Sigmoid colon (tissue), 7 donors: ENCODE measurements at regions of chr6 and their contacts with region 1.

Region 1: DNA sequence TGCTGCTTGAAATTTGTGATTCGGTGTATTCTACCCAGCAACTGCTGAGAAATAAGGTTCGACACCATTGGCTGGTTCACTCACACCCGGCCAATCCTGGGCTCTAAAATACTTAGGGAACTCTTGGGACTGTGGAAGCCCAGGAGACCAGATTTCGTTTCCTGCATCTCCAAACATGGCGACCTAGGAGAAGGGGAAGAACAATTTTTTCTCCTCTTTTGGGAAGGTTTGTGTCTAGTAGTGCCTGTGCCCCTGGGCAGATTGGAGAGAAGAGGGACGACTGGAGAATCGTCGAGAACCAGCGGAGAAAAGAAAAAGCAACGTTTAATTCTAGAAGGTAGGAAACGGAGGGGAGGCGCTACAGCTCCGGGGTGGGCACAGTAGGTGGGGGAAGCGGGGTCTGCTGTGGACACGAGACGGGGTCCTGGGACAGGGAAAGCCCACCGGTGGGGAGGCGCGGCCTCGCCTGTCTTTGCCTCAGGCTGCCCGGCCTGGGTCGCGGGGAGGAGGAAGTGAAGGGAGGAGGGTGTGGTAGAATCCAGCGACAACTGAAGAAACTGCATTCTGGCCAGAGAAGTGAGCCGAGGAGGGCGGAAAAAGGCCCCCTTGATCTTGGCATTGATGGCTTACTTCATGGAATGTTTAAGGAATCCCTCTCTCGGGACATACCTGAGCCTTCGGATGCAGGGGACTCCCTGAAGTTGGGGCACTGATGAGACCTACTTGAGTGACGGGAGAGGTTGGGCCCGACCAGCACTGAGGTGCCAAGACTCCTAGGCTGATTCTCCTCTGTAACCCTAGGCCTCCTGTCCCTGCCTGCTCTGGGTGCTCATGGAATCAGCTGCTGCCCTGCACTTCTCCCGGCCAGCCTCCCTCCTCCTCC is at the start of gene BTN2A1:
- DNase-seq: peak; percentile 93
- H3K4me3 ChIP-seq: peak within 1 kb of the TSS; percentile 88 to 94 (median 92)
- H3K27ac ChIP-seq: peak within 1 kb of the TSS; percentile 93 to 96 (median 95)
- H3K4me1 ChIP-seq: peaks cover 0 to 52% (median 47%) of the 10 kb centered on the region in 4 donors
- H3K27me3 ChIP-seq: no peaks in the 10 kb centered on the region
- CTCF ChIP-seq: no peak
- EP300 ChIP-seq: no peak
- POLR2A ChIP-seq: peak in 1 of 2 donors; percentile 11
- total RNA-seq, gene BTN2A1: 17.6 to 24.6 (median 19.1) TPM

Region 2: DNA sequence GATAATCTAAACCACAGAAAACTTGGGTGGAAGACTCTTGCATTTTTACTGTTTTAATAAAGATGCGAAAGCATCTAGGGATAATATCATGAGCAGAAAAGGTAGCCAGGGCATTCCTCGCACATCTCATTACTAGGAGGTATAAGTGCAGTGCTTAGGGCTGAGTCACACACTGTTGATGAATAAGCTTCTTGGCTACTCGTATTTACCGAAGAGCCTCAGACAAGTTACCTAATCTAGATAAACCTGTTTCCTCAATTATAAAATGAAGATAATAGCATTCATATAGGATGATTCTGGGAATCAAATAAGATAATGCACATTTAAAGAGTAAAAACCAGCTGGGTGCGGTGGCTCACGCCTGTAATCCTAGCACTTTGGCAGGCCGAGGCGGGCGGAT is 1811.3 kb before region 1 on chr6:
- intact Hi-C with region 1: no loop called
- DNase-seq: no peak
- H3K4me3 ChIP-seq: no peak overlapping the region
- H3K27ac ChIP-seq: no peak overlapping the region
- H3K4me1 ChIP-seq: peaks cover 0 to 7% (median 2%) of the 10 kb centered on the region in 4 donors
- H3K27me3 ChIP-seq: peaks cover 0 to 16% (median 0%) of the 10 kb centered on the region in 3 donors
- CTCF ChIP-seq: no peak
- EP300 ChIP-seq: no peak
- POLR2A ChIP-seq: no peak

Region 3: GRCh38 chr6:26421259-26422144 is 36.5 kb before region 1 on chr6:
- intact Hi-C with region 1: loop called (anchors 5 kb)
- DNase-seq: peak; percentile 90
- H3K4me3 ChIP-seq: peak overlapping the region; percentile 59 to 81 (median 78)
- H3K27ac ChIP-seq: peak overlapping the region; percentile 88 to 93 (median 90)
- H3K4me1 ChIP-seq: peaks cover 0 to 40% (median 27%) of the 10 kb centered on the region in 4 donors
- H3K27me3 ChIP-seq: no peaks in the 10 kb centered on the region
- CTCF ChIP-seq: no peak
- EP300 ChIP-seq: no peak
- POLR2A ChIP-seq: peak in 1 of 2 donors; percentile 22

Region 4: DNA sequence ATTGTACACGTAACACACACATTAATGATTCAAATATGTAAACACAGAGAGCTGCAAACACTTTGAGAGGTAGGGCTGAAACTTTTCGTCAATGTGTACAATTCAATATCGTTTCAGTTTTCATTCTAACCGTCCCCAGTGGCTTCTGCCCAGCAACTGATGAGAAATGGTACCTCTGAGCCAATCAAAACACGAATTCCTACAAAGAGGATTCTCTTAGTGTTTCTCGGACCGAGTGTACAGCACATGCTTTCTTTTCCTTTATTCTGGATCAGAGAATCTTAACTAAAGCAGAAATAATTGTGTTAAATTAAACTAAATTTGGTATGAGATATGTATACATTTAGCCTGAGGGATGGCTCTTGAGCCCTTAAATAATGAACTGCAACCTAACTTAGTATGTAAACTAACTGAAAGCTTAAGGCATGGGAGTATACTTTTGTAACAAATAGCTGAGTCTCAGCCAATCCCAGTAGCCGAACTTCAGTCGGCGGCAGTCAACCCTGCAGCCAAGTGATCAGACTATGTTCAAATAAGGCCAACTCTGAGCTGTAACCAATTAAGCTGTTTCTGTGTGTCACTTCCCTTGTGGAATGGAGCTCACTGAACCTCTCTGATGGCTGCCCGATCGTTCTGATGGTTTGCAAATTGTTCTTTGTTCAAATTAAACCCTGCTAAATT is 15.9 kb after region 1 on chr6:
- intact Hi-C with region 1: loop called (anchors 2 kb)
- DNase-seq: peak; percentile 92
- H3K4me3 ChIP-seq: peak overlapping the region; percentile 34 to 53 (median 46)
- H3K27ac ChIP-seq: peak overlapping the region; percentile 88 to 92 (median 90)
- H3K4me1 ChIP-seq: peaks cover 0 to 30% (median 16%) of the 10 kb centered on the region in 4 donors
- H3K27me3 ChIP-seq: no peaks in the 10 kb centered on the region
- CTCF ChIP-seq: no peak
- EP300 ChIP-seq: no peak
- POLR2A ChIP-seq: peak; percentile 67 to 79

Region 5: GRCh38 chr6:26520853-26521599 is 63.0 kb after region 1 on chr6:
- intact Hi-C with region 1: loop called (anchors 2 kb)
- DNase-seq: peak; percentile 95
- H3K4me3 ChIP-seq: peak overlapping the region; percentile 55 to 65 (median 61)
- H3K27ac ChIP-seq: peak overlapping the region; percentile 96 to 99 (median 98)
- H3K4me1 ChIP-seq: peaks cover 0 to 32% (median 6%) of the 10 kb centered on the region in 4 donors
- H3K27me3 ChIP-seq: no peaks in the 10 kb centered on the region
- CTCF ChIP-seq: no peak
- EP300 ChIP-seq: no peak
- POLR2A ChIP-seq: no peak